Activated naive CD4-positive, alpha-beta T cell treated with anti-CD3 and anti-CD28 coated beads for 36 hours (primary cell): ENCODE measurements at regions of chr4 and their contacts with region 1.

Region 1: GRCh38 chr4:142801966-142802365 is 44.1 kb downstream of the INPP4B start:
- DNase-seq: peak; percentile 58
- H3K4me3 Mint-ChIP-seq: no peak overlapping the region
- H3K27ac Mint-ChIP-seq: peak overlapping the region; percentile 24
- H3K4me1 Mint-ChIP-seq: peaks cover 19% of the 10 kb centered on the region
- H3K27me3 Mint-ChIP-seq: no peaks in the 10 kb centered on the region

Region 2: DNA sequence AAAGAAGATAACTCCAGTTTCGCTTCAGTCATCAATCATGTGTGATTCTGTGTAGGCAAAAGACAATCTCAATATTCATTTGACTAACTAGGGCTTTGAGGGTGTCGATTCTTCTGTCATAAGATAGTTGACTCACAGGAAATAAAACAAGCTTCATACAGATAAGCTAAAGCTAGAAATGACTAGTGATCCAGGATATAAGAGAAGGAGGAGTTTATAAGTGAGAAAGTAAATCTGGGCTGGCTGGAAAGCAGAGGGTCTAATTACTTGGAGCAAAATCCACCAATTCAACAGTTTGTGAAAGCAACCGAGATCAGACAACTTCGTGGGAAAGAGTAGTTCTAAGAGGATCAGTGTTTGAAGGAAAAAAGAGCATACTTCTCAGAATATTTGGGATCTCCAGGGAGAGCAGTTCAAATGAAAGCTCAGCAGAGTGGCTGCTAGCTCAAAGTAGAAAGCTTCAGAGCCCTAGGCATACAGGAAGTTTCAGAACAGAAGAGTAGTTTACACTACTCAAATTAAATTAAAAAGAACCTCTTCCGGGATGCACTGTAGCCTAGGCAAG is 385.2 kb before region 1 on chr4:
- CTCF ChIA-PET with region 1: no interaction called
- intact Hi-C with region 1: no loop called
- DNase-seq: peak; percentile 36
- H3K4me3 Mint-ChIP-seq: peak overlapping the region; percentile 62
- H3K27ac Mint-ChIP-seq: peak overlapping the region; percentile 95
- H3K4me1 Mint-ChIP-seq: peaks cover 66% of the 10 kb centered on the region
- H3K27me3 Mint-ChIP-seq: no peaks in the 10 kb centered on the region

Region 3: DNA sequence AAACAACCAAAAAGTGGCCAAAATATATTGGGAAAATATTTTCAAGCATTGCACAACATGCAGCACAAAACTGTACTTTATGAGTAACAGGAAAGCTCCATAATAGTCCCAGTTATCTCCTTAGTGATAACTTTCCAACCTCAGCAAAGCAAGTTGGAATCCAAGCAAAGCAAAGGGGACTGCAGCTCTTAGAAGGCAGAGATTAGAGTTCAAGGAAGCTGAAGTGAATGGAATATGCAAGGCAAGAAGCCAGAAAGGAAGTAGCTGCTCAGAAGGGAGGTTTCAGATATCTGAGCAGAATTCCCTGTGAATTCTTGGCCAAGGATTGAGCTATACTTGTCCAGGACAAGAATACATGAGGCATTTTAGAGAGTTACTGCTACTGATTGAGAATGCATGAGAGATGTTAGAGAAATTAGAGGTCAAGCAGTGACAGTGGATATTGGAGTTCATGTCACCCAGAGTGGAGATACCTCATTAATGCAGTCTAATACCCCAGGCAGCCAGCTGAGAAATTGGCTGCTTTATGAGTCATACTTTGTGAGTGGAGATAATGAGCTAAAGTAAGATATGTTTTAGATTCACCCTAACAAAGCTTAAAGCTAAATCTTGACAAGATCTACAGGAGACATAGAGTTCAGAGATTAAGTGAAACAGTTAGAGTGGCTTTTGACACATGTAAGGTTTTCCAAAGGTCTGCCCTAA is 58.7 kb before region 1 on chr4:
- CTCF ChIA-PET with region 1: interaction called, 3 read pairs
- intact Hi-C with region 1: loop called (anchors 5 kb)
- DNase-seq: no peak
- H3K4me3 Mint-ChIP-seq: no peak overlapping the region
- H3K27ac Mint-ChIP-seq: no peak overlapping the region
- H3K4me1 Mint-ChIP-seq: no peaks in the 10 kb centered on the region
- H3K27me3 Mint-ChIP-seq: no peaks in the 10 kb centered on the region

Region 4: GRCh38 chr4:142817442-142817841 is 15.5 kb after region 1 on chr4:
- CTCF ChIA-PET with region 1: no interaction called
- intact Hi-C with region 1: loop called (anchors 1 kb)
- DNase-seq: peak; percentile 80
- H3K4me3 Mint-ChIP-seq: peak overlapping the region; percentile 27
- H3K27ac Mint-ChIP-seq: peak overlapping the region; percentile 30
- H3K4me1 Mint-ChIP-seq: peaks cover 23% of the 10 kb centered on the region
- H3K27me3 Mint-ChIP-seq: no peaks in the 10 kb centered on the region

Region 5: DNA sequence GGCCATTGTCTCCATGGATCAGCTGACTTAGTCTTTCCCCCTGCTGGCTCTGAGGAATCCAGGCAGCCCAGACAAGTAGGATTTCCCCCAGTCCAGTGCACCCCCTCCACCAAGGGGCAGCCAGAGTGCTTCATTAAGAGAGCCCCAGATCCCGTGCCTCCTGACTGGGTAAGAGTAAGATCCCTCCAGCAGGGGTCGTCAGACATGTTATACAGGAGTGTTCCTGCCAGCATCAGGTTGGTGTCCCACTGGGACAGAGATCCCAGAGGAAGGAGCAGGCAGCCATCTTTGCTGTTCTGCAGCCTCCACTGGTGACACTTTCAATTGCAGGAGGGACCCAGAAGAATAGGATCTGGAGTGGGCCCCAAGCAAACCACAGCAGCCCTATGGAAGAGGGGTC is 73.2 kb after region 1 on chr4:
- CTCF ChIA-PET with region 1: no interaction called
- intact Hi-C with region 1: no loop called
- DNase-seq: no peak
- H3K4me3 Mint-ChIP-seq: no peak overlapping the region
- H3K27ac Mint-ChIP-seq: no peak overlapping the region
- H3K4me1 Mint-ChIP-seq: no peaks in the 10 kb centered on the region
- H3K27me3 Mint-ChIP-seq: peaks cover 2% of the 10 kb centered on the region